Spleen (tissue), 13 donors: ENCODE measurements at regions of chr7 and their contacts with region 1.

Region 1: DNA sequence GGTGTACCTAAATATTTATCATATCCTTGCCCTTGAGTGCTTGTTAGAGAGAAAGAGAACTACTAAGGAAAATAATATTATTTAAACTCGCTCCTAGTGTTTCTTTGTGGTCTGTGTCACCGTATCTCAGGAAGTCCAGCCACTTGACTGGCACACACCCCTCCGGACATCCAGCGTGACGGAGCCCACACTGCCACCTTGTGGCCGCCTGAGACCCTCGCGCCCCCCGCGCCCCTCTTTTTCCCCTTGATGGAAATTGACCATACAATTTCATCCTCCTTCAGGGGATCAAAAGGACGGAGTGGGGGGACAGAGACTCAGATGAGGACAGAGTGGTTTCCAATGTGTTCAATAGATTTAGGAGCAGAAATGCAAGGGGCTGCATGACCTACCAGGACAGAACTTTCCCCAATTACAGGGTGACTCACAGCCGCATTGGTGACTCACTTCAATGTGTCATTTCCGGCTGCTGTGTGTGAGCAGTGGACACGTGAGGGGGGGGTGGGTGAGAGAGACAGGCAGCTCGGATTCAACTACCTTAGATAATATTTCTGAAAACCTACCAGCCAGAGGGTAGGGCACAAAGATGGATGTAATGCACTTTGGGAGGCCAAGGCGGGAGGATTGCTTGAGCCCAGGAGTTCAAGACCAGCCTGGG is 11.4 kb downstream of the SERPINE1 start:
- DNase-seq: no peak
- H3K4me3 ChIP-seq: peak overlapping the region in 2 of 8 donors; percentile 1 to 43
- H3K27ac ChIP-seq: peak overlapping the region in 6 of 8 donors; percentile 7 to 70 (median 38)
- H3K4me1 ChIP-seq: peaks cover 9 to 27% (median 16%) of the 10 kb centered on the region in 6 donors
- H3K27me3 ChIP-seq: peaks cover 0 to 56% (median 0%) of the 10 kb centered on the region in 7 donors
- CTCF ChIP-seq: peak; percentile 41 to 87 (median 73)
- POLR2A ChIP-seq: no peak

Region 2: DNA sequence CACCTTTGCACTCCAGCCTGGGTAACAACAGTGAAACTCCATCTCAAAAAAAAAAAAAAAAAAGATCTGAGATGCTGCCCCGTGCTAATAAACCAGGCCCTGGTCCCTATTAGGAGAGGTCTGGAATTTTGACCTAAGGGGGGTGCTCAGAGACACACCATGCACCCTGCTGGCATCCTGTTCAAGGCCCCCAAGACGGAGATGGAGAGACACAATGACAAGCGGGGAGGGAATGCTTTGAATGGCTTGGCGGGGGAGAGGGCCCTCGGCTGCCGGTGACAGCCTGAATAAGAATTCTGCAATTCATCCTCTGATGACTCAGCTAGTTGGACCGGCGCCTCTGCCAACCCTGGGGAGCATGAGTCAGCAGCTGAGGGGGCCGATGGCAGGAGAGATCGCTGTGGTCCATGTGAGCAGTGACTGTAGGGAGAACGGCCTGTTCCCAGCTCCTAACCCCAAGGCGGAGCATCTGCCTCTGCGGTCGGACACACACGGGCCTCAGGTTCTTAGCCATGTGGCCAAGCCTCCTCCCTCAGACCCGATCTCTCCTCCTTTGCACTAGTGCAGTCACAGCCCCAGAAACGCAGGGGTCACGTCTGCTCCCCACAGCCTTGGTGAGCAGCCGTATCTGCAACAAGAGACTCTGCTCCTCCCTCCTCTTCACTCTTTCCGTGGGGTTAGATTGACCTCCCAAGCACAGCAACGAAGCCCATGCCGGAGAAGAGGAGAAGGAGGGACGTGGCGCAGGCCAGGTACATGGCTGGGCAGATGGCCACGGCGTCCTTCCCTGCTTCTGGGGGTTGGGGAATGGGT is 38.2 kb before region 1 on chr7:
- intact Hi-C with region 1: loop called (anchors 5 kb)
- DNase-seq: peak; percentile 85
- H3K4me3 ChIP-seq: no peak overlapping the region
- H3K27ac ChIP-seq: peak overlapping the region in 7 of 8 donors; percentile 29 to 67 (median 52)
- H3K4me1 ChIP-seq: peaks cover 0 to 38% (median 17%) of the 10 kb centered on the region in 6 donors
- H3K27me3 ChIP-seq: peaks cover 0 to 53% (median 0%) of the 10 kb centered on the region in 7 donors
- CTCF ChIP-seq: no peak
- POLR2A ChIP-seq: no peak

Region 3: DNA sequence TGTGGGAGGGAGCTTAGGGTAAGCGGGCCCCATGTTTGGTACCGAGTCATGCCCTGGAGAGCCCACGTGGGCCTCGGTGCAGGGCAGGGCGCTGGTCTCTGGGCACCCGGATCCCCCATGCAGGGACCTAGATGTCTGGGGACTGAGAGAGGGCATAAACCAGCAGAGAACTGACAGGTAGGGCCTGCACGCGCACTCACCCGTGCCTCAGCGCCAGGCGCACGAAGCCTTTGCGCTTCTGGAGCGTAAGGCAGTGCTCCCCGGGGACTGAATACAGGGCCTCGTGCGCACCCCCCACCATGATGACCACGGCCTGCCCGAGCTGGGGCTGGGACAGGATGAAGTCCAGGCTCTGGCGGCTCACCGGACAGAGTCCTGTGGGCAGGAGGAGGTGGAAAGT is 59.6 kb after region 1 on chr7:
- intact Hi-C with region 1: loop called (anchors 10 kb)
- DNase-seq: no peak
- H3K4me3 ChIP-seq: no peak overlapping the region
- H3K27ac ChIP-seq: no peak overlapping the region
- H3K4me1 ChIP-seq: peaks cover 0 to 22% (median 15%) of the 10 kb centered on the region in 6 donors
- H3K27me3 ChIP-seq: peaks cover 4 to 68% (median 25%) of the 10 kb centered on the region in 7 donors
- CTCF ChIP-seq: no peak
- POLR2A ChIP-seq: no peak

Region 4: DNA sequence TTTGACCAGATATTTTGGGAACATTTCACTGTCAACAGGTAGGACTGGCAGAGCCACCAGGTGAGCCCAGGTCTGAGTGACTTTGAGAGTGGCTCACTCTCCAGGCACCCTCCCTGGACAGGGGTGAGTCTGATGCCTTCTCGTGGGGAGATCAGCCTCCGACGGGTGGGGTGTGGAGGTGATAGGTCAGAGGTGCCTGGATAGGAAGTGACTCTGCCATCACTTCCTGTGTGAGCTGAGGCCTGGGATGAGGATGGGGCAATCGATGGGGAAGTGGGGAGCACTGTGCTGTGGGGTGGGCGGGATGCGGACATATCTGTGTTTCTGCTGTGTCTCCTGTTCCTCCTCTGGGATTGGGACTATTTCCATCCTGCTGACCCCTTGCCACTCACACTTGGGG is 148.7 kb after region 1 on chr7:
- intact Hi-C with region 1: loop called (anchors 5 kb)
- DNase-seq: no peak
- H3K4me3 ChIP-seq: no peak overlapping the region
- H3K27ac ChIP-seq: no peak overlapping the region
- H3K4me1 ChIP-seq: peaks cover 0 to 15% (median 5%) of the 10 kb centered on the region in 6 donors
- H3K27me3 ChIP-seq: peaks cover 0 to 32% (median 11%) of the 10 kb centered on the region in 7 donors
- CTCF ChIP-seq: no peak
- POLR2A ChIP-seq: no peak

Region 5: DNA sequence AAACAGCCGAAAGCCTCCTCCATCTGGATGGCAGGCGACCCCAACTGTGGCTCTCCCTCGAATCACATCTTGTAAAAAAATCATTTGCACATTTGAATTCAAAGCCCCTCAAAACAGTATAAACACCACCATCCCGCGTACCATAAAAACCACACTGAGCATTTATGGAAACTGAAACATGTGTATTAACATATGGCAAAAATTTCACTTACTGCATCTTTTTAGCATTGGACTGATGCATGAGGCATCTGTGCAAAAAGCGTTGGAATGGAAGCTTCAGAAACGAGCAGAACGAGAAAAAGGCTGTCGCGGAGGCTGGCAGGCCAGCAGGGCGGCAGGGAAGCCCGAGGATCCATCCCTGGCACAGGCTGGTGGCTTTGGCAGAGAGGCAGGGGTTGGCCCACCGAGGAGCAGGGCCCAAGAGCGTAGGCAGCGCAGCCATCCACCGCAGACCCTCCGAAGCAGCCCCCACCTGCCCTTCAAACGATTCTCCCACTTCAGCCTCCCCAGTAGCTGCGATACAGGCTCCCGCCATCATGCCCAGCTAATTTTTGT is 639.8 kb after region 1 on chr7:
- intact Hi-C with region 1: no loop called
- DNase-seq: no peak
- H3K4me3 ChIP-seq: no peak overlapping the region
- H3K27ac ChIP-seq: no peak overlapping the region
- H3K4me1 ChIP-seq: peaks cover 0 to under 1% (median 0%) of the 10 kb centered on the region in 6 donors
- H3K27me3 ChIP-seq: peaks cover 0 to 6% (median 0%) of the 10 kb centered on the region in 7 donors
- CTCF ChIP-seq: no peak
- POLR2A ChIP-seq: no peak